Activated CD8-positive, alpha-beta T cell treated with anti-CD3 and anti-CD28 coated beads, Interleukin-2, amount 10 ng/mL, durations not matched to agents 7 days and 5 days (primary cell): ENCODE measurements at regions of chr2 and their contacts with region 1.

Region 1: GRCh38 chr2:158467248-158467647 is 10.5 kb downstream of the PKP4 start:
- DNase-seq: no peak
- ATAC-seq: no peak
- H3K4me3 Mint-ChIP-seq: no peak overlapping the region
- H3K27ac Mint-ChIP-seq: no peak overlapping the region
- H3K4me1 Mint-ChIP-seq: no peaks in the 10 kb centered on the region
- H3K27me3 Mint-ChIP-seq: no peaks in the 10 kb centered on the region

Region 2: DNA sequence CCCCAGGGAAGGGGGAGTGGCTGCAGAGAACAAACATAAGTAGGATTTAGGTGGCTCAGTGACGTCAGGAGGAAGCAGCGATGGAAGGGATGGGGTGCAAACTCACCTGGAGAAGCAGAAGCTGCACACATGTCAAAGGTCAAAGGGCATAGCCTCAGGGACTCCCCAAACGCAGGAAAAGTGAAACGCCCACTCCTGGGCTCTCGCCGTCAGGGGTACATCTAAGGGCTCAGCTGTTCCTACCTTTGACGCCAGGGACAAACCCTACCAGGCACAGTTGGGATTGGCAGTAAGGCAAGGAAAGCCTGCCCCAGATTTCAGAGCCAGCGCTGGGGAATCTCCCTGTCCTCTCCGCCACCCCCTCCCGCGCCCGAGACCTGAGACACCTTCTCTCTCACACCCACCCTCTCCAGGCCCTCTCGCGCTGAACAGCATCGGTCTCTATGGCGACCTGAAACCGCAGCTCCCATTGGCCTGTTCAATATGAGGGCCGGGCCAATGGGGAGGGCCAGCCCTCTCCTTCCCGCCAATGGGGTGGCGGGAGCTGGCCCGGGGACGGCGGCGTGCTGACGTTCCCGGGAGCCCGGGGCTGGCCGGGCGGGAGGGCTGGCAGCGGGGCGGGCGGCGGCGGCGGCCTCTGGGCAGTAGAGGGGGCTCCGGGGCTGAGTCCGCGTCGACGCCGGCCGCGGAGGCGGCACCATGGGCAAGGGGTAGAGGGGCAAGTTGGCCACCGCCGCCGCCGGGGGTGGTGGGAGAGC is 10.8 kb before region 1 on chr2 and contains the starts of genes CCDC148 and PKP4:
- CTCF ChIA-PET with region 1: interaction called, 17 read pairs
- POLR2A ChIA-PET with region 1: no interaction called
- DNase-seq: peak; percentile 91
- ATAC-seq: peak; percentile 91
- H3K4me3 Mint-ChIP-seq: peak within 1 kb of the TSS; percentile 87
- H3K27ac Mint-ChIP-seq: peak within 1 kb of the TSS; percentile 87
- H3K4me1 Mint-ChIP-seq: peaks cover 25% of the 10 kb centered on the region
- H3K27me3 Mint-ChIP-seq: peaks cover 32% of the 10 kb centered on the region
- total RNA-seq, gene CCDC148: 0.16 TPM in 1 of 2 experiments, not detected in the other
- total RNA-seq, gene PKP4: 32.9 to 35.8 TPM